Dendritic cell treated with granulocyte-macrophage colony-stimulating factor and Interleukin-4, amounts not matched to agents 40 ng/mL and 50 ng/mL, for 4 days (primary cell): ENCODE measurements at regions of chr17 and their contacts with region 1.

Region 1: DNA sequence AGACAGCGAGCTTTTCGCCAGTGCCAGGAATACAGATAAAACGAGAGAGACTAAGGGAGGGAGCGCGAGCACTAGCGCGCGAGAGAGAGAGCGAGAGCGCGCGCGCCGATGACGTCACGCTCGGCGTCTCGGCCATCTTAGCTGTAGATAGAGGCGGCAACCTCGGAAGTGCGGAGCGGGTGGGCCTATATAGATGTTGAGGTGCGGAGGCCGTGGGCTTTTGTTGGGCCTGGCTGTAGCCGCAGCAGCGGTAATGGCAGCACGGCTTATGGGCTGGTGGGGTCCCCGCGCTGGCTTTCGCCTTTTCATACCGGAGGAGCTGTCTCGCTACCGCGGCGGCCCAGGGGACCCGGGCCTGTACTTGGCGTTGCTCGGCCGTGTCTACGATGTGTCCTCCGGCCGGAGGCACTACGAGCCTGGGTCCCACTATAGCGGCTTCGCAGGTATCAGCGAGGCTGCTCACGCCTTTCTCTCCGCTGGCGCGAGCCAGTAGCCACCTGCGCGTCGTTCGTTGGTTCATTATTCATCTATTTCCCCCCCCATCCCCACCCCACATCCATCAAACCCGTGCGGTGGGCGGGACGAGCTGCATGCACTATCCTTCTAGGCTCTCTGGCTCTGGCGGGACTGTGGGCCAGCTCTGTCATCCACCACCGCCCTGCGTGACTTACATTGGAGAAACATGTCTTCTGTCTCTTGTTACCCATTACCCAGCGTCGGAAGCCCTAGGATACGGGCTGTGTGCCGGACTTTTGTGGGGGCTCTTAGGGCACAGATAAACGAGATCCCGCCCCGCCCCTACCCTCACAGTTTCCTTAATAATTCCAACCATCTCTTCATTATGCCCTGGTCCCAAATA is 795 bp downstream of the CYB5D2 start:
- H3K4me3 Mint-ChIP-seq: peak overlapping the region; percentile 95
- H3K27ac Mint-ChIP-seq: peak overlapping the region; percentile 100
- H3K4me1 Mint-ChIP-seq: peaks cover 39% of the 10 kb centered on the region
- H3K27me3 Mint-ChIP-seq: no peaks in the 10 kb centered on the region

Region 2: DNA sequence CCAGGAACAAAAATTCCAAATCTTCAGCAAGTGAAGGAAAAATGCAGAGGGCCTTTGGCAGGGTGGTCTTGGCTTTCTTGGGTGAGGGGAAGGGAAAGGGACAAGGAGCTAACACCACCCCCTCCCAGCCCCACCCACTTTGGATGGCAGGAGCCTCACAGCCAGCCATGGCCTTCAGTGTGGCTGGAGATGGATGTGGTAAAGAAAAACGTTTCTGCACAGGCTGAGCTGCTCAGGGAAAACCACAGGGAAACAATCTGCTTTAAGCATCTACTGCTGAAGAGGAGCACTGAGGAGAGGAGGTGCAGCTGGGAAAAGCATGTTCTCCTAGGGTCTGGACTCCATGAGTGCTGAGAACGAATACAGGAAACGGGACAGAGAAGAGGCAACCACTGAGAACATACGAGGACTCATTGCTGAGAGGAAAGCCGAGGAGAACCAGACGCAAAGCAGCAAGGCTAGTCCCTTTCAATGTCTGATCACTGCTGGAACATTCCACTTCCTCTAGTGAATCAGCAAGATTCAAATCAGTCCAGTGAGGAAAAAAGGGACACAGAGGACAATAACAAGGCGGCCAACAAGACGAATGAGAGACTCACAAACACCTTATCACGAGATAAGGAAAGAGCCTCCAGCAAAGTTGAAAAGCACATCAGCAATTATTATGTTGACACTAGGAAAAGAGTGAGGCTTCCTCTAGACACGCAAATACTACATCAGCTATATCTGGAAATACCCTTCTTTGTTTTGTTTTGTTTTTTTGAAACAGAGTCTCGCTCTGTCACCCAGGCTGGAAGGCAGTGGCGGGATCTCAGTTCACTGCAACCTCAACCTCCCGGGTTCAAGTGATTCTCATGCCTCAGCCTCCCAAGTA is 42.7 kb before region 1 on chr17:
- intact Hi-C with region 1: loop called (anchors 1 kb)
- H3K4me3 Mint-ChIP-seq: peak overlapping the region; percentile 53
- H3K27ac Mint-ChIP-seq: peak overlapping the region; percentile 92
- H3K4me1 Mint-ChIP-seq: peaks cover 37% of the 10 kb centered on the region
- H3K27me3 Mint-ChIP-seq: no peaks in the 10 kb centered on the region

Region 3: DNA sequence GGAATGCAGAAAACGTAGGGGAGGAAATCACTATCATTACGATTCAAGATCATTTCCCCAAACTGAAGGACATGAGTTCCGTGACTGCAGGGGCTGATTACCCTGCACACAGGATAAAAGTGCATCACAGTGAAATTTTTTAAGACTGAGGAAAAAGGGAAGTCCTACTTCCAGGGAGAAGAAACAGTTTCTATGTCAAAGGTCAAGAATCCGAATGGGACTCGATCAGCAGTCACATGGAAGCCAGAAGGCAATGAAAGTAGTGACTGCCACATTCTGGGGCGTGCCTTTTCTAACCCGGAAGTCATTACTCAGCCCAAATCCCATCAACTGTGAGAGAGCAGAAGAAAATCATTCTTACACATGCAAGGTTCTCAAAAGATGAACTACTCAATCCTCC is 13.1 kb before region 1 on chr17:
- intact Hi-C with region 1: loop called (anchors 1 kb)
- H3K4me3 Mint-ChIP-seq: peak overlapping the region; percentile 55
- H3K27ac Mint-ChIP-seq: peak overlapping the region; percentile 91
- H3K4me1 Mint-ChIP-seq: peaks cover 71% of the 10 kb centered on the region
- H3K27me3 Mint-ChIP-seq: no peaks in the 10 kb centered on the region